Motor neuron (in vitro differentiated cells): ENCODE measurements at regions of chr12 and their contacts with region 1.

Region 1: DNA sequence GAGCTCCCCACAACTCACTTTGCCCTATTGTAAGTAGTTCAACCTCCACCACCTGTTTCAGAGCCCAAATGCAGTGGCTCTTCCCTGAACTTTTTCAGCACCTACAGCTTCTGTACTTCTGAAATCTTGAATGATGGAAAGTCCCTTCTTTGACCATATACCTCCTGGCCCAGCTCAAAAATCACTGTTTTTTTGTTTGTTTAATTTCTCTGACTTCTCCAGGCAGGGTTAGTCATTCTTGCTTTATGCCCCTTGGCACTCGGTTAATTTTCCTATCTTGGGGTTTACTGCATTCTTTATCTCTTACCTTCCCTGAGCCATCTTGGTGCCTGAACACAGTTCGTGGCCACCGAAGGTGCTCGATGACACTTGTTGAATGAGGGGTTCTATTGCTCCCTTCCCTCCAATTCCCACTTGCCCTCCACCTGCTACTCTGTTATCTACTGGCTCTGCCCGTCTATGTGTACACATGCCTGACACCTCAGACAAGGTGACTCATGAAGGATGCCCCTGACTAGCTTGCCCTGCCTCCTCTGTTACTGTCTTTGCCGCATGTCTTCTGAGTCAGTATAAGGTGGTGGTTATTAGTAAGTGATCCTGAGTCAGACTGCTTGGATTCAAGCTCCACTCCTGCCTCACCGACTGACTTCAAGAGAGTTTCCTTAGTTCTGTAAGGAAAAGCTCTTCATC is 4.4 kb downstream of the AMHR2 start:
- ATAC-seq: peak in 5 of 8 experiments; percentile 48 to 81 (median 63)
- H3K4me3 ChIP-seq: no peak overlapping the region
- H3K27ac ChIP-seq: no peak overlapping the region
- H3K4me1 ChIP-seq: peaks cover 0 to 2% of the 10 kb centered on the region in 2 donors

Region 2: DNA sequence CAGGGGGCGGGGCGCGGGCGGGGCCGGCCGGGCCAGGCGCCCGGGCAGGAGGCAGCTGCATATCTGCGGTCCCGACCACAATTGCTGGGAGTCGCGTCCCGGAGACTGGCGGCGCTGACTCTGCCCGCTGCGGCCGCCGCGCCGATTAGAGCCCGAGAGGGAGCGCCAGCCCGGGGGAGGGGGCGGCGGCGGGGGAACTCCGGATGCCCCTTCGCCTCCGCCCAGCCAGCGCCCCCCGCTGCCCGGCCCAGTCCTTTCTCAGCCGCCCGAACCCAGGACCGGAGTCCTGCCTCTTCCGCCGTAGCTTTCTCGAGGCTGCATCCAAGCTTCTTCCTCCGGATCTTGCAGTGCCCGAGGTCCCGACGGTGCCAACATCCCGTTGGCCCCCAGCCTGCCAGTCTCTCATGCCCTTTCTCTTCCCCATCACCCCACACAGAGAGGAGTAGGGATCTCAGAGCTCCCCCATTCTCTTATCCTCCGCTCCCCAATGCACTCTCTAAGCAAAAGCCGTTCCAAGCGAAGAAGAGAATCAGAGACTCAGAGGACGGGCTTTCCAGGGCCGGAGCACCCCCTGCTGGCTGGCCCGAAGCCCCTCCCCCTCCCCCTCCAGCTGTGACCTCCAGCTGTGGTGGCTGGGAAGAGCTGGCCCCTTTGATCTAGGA is 83.1 kb before region 1 on chr12:
- in situ Hi-C with region 1: loop called in 3 of 9 experiments (anchors 10 to 25 kb)
- ATAC-seq: peak; percentile 83 to 94 (median 90)
- H3K4me3 ChIP-seq: peak overlapping the region; percentile 38 to 58 (median 47)
- H3K27ac ChIP-seq: peak overlapping the region in 1 of 2 donors; percentile 4
- H3K4me1 ChIP-seq: peaks cover 0 to 5% of the 10 kb centered on the region in 2 donors

Region 3: DNA sequence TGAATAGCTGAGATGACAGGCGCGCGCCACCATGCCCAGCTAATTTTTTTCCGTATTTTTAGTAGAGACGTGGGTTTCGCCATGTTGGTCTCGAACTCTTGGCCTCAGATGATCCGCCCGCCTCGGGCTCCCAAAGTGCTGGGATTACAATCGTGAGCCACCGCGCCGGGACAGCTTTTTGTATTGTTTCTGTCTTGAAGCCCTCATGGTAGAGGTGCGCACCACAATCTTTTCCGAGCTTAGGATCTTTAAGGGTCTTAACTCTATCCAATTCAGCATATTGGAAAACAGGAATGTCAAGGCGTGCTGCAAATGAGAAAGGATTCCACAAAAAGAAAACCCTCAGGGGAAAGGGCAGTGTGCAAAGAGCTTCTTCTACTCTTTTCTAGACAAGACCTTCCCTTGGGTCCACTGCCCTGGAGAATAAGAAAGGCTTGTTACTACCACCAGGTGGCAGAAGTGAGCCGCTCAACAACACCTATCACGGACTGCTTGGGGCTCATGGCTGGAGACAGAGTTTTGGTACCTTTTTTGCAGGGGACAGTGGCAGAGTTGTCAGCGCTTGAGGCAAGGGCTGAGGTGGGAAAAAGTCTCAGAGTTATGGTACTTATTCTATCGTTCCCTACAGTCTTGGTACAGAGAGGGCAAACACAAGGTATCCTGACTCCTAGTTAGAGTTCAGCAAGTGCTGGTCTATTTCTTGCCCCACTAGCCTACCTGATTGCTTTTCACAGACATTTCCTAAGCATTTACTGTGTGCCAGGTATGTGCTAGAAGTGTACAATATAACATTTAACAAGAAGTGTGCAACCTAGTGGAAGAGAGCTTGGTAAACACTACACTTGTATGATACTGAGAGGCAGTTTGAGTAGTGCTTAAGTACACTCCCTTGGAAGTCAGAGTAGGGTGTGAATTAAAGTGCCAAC is 75.5 kb before region 1 on chr12:
- in situ Hi-C with region 1: loop called in 3 of 9 experiments (anchors 10 to 25 kb)
- ATAC-seq: peak; percentile 99 to 100 (median 100)
- H3K4me3 ChIP-seq: no peak overlapping the region
- H3K27ac ChIP-seq: no peak overlapping the region
- H3K4me1 ChIP-seq: no peaks in the 10 kb centered on the region